ENCODE measurements at regions of chr3 and their contacts with region 1.

Region 1: GRCh38 chr3:124928333-124929202 is 6.0 kb downstream of the MUC13 start:
- DNase-seq: peak; percentile 74
- ATAC-seq: peak; percentile 80
- H3K4me3 ChIP-seq: no peak overlapping the region
- H3K27ac ChIP-seq: no peak overlapping the region
- H3K4me1 ChIP-seq: peaks cover 2% of the 10 kb centered on the region; the same call in 1 of the 2 replicates
- H3K27me3 ChIP-seq: peaks cover 13% of the 10 kb centered on the region
- CTCF ChIP-seq: peak; percentile 79
- POLR2A ChIP-seq: no peak
- RAD21 ChIP-seq: peak; percentile 78

Region 2: GRCh38 chr3:124964387-124964786 is 35.8 kb after region 1 on chr3:
- CTCF ChIA-PET with region 1: no interaction called
- POLR2A ChIA-PET with region 1: no interaction called
- dilution Hi-C with region 1: no loop called
- in situ Hi-C with region 1: no loop called
- intact Hi-C with region 1: no loop called
- DNase-seq: peak; percentile 80
- ATAC-seq: peak; percentile 35
- H3K4me3 ChIP-seq: no peak overlapping the region
- H3K27ac ChIP-seq: no peak overlapping the region
- H3K4me1 ChIP-seq: peaks cover 5% of the 10 kb centered on the region; the same call in 1 of the 2 replicates
- H3K27me3 ChIP-seq: no peaks in the 10 kb centered on the region
- CTCF ChIP-seq: no peak
- POLR2A ChIP-seq: no peak
- RAD21 ChIP-seq: no peak

Region 3: DNA sequence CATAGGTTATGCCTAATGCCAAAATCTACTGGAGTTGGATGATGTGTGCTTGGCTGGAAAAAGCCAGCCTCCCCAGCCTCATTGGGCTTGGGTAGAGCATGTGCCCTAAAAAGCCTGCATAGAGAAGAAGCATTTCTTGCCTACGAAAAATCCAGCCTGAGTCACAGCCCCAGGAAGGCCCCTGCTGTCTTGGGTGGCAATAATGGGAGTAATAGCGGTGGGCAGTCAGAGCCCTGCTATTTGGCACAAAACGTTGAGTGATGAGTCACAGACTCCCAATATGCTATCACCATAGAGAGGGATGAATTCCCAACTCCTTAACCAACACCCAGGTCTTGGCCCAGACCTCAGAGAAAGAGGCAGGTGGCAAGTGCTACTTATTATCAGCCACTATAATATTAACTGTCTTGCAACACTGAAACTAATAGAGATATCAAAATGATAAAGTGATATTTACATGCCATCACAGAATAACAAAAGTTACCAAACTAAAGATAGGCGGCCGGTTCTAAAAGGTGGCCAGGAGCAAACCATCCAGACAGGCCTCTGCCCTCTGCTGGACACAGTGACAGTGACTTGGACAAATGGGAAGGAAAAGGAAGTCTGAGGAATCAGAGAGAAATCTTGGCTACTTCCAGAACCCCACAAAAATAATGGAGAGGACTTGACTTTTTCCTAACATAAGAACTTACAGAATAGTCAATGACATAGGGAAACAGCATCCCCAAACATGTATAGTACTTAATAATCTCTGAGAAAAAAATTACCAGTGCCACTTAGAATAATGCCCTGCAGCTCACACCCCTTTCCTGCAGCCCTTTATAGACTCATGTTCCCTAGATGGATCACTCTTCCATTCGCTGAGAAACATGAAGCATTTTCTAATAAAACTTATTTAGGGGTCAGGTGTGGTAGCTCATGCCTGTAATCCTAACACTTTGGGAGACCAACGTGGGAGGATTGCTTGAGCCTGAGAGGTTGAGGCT is 57.9 kb after region 1 on chr3:
- CTCF ChIA-PET with region 1: no interaction called
- POLR2A ChIA-PET with region 1: no interaction called
- dilution Hi-C with region 1: no loop called
- in situ Hi-C with region 1: no loop called
- intact Hi-C with region 1: loop called (anchors 1 kb)
- DNase-seq: peak; percentile 96
- ATAC-seq: peak; percentile 73
- H3K4me3 ChIP-seq: no peak overlapping the region
- H3K27ac ChIP-seq: peak overlapping the region; percentile 73
- H3K4me1 ChIP-seq: peaks cover 15% of the 10 kb centered on the region
- H3K27me3 ChIP-seq: no peaks in the 10 kb centered on the region
- CTCF ChIP-seq: peak; percentile 41
- POLR2A ChIP-seq: no peak
- RAD21 ChIP-seq: peak; percentile 27; the same call in 1 of the 2 replicates

Region 4: GRCh38 chr3:125165189-125165947 is 236.8 kb after region 1 on chr3:
- CTCF ChIA-PET with region 1: no interaction called
- POLR2A ChIA-PET with region 1: no interaction called
- dilution Hi-C with region 1: no loop called
- in situ Hi-C with region 1: no loop called
- intact Hi-C with region 1: loop called (anchors 2 kb)
- DNase-seq: peak; percentile 35
- ATAC-seq: peak; percentile 77
- H3K4me3 ChIP-seq: no peak overlapping the region
- H3K27ac ChIP-seq: no peak overlapping the region
- H3K4me1 ChIP-seq: peaks cover 20% of the 10 kb centered on the region
- H3K27me3 ChIP-seq: no peaks in the 10 kb centered on the region
- CTCF ChIP-seq: peak; percentile 61
- POLR2A ChIP-seq: no peak
- RAD21 ChIP-seq: peak; percentile 65

Region 5: GRCh38 chr3:125192190-125193035 is 263.8 kb after region 1 on chr3:
- CTCF ChIA-PET with region 1: interaction called, 3 read pairs
- POLR2A ChIA-PET with region 1: no interaction called
- dilution Hi-C with region 1: no loop called
- in situ Hi-C with region 1: no loop called
- intact Hi-C with region 1: loop called (anchors 10 kb)
- DNase-seq: no peak
- ATAC-seq: no peak
- H3K4me3 ChIP-seq: no peak overlapping the region
- H3K27ac ChIP-seq: no peak overlapping the region
- H3K4me1 ChIP-seq: peaks cover 17% of the 10 kb centered on the region
- H3K27me3 ChIP-seq: 0 out of 2 replicates have a peak, but pooled peaks cover 1% of the 10 kb centered on the region
- CTCF ChIP-seq: no peak
- POLR2A ChIP-seq: no peak
- RAD21 ChIP-seq: no peak